PC-9 (cell line): ENCODE measurements at regions of chr17 and their contacts with region 1.

Region 1: DNA sequence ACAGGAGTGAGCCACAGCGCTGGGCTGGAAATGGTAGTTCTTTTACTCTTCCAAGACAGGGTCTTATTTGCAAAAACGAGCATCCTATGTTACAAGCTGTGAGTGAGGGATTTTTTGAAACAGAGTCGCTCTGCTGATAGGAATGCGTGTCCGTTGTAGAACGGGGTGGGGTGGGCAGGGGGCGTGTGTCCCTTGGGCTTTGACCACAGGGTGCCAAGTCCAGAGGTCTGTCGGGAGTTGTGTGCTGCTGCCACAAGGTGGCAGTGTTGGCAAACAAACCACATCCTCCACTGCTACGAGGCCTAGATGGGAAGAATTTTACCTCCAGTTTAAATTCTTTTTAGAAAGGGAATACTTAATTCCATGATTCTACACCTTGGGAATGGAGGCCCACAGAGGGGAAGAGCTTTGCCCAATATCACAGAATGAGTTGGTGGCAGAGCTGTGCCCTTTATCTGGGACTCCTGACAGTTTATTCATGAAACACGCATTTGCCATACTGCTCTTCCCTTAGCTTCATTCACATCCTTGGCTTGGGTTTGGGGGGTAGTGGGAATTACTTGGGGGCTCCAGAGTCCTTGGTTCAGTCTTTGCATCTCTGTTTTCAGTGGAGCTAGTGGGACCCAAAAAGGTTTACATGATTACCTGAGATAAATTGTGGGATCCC is 30.6 kb upstream of the ETV4 start:
- DNase-seq: peak; percentile 55 to 67
- H3K4me3 ChIP-seq: no peak overlapping the region
- H3K27ac ChIP-seq: no peak overlapping the region
- H3K4me1 ChIP-seq: peaks cover 52% of the 10 kb centered on the region
- H3K27me3 ChIP-seq: no peaks in the 10 kb centered on the region
- CTCF ChIP-seq: peak; percentile 95

Region 2: GRCh38 chr17:43517615-43518386 is 58.9 kb before region 1 on chr17:
- CTCF ChIA-PET with region 1: interaction called, 4 read pairs
- POLR2A ChIA-PET with region 1: no interaction called
- intact Hi-C with region 1: loop called (anchors 1 kb)
- DNase-seq: no peak
- H3K4me3 ChIP-seq: no peak overlapping the region
- H3K27ac ChIP-seq: no peak overlapping the region
- H3K4me1 ChIP-seq: no peaks in the 10 kb centered on the region
- H3K27me3 ChIP-seq: no peaks in the 10 kb centered on the region
- CTCF ChIP-seq: no peak

Region 3: GRCh38 chr17:43546319-43547188 is 30.1 kb before region 1 on chr17 and contains the start of gene ETV4:
- CTCF ChIA-PET with region 1: no interaction called
- POLR2A ChIA-PET with region 1: no interaction called
- intact Hi-C with region 1: no loop called
- DNase-seq: peak; percentile 86 to 96
- H3K4me3 ChIP-seq: peak within 1 kb of the TSS; percentile 85
- H3K27ac ChIP-seq: peak within 1 kb of the TSS; percentile 94
- H3K4me1 ChIP-seq: peaks cover 34% of the 10 kb centered on the region
- H3K27me3 ChIP-seq: no peaks in the 10 kb centered on the region
- CTCF ChIP-seq: no peak
- total RNA-seq, gene ETV4: 61.9 and 84.2 TPM in 2 replicates

Region 4: DNA sequence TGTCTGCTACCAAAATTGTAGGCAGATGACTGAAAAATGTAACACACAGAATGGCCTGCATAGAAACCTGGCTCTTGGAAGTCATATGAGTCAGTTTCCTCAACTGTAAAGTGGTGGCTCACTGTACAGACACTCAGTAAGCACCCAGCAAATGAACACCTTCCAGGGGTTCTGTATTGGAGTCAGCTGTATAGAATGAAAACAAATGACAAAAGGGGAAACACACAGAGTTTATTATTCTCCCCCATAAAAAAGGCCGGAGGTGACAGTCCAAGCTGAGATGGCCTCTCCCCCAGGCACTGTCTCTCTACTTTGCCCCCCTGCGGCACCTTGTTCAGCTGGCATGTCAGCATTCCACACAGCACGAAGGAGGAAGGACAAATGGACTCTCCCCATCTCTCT is 91.3 kb after region 1 on chr17:
- CTCF ChIA-PET with region 1: interaction called, 24 read pairs
- POLR2A ChIA-PET with region 1: interaction called, 5 read pairs
- intact Hi-C with region 1: loop called (anchors 1 kb)
- DNase-seq: peak; percentile 72 to 76
- H3K4me3 ChIP-seq: peak overlapping the region; percentile 19; the same call in 1 of the 2 replicates
- H3K27ac ChIP-seq: peak overlapping the region; percentile 66
- H3K4me1 ChIP-seq: peaks cover 49% of the 10 kb centered on the region
- H3K27me3 ChIP-seq: no peaks in the 10 kb centered on the region
- CTCF ChIP-seq: no peak

Region 5: DNA sequence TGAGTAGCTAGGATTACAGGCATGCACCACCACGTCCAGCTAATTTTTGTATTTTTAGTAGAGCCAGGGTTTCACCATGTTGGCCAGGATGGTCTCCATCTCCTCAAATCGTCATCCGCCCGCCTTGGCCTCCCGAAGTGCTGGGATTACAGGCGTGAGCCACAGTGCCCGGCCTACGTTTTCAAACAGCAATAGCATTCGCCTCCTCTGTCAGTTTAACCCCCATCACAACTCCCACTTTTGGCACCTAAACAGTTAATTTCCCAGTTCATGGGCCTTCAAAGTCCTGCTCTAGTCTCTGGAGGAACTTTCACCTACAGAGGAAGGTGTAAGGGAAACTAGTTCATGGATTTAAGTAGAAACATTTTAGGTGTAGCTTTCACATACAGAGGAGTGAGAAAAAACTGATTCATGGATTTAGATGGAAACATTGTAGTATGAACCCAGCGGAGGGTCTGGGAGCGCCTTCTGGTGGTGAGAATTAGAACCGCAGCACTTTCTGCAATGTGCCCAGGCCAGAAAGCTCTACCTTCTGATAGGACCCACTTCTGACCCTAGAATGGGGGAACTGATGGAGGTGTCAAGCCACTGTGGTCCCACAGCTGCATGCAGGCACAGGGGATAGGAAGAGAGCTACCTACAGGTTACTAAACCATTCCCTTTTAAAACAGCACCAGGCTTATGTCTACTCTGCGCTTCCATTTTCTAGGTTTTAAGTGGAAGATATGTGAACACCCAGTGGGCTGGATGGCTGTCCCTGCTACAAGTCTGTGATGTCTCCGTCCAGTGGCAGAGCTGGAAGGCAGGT is 97.0 kb after region 1 on chr17:
- CTCF ChIA-PET with region 1: interaction called, 24 read pairs
- POLR2A ChIA-PET with region 1: interaction called, 5 read pairs
- intact Hi-C with region 1: loop called (anchors 1 kb)
- DNase-seq: peak; percentile 57 to 76
- H3K4me3 ChIP-seq: no peak overlapping the region
- H3K27ac ChIP-seq: no peak overlapping the region
- H3K4me1 ChIP-seq: peaks cover 40% of the 10 kb centered on the region
- H3K27me3 ChIP-seq: no peaks in the 10 kb centered on the region
- CTCF ChIP-seq: peak; percentile 95

Region 6: GRCh38 chr17:43694077-43694870 is 117.6 kb after region 1 on chr17:
- CTCF ChIA-PET with region 1: no interaction called
- POLR2A ChIA-PET with region 1: no interaction called
- intact Hi-C with region 1: loop called (anchors 1 kb)
- DNase-seq: peak; percentile 68 to 72
- H3K4me3 ChIP-seq: no peak overlapping the region
- H3K27ac ChIP-seq: no peak overlapping the region
- H3K4me1 ChIP-seq: no peaks in the 10 kb centered on the region
- H3K27me3 ChIP-seq: no peaks in the 10 kb centered on the region
- CTCF ChIP-seq: peak; percentile 97

Region 7: GRCh38 chr17:43706235-43706634 is 129.5 kb after region 1 on chr17:
- CTCF ChIA-PET with region 1: no interaction called
- POLR2A ChIA-PET with region 1: no interaction called
- intact Hi-C with region 1: no loop called
- DNase-seq: no peak
- H3K4me3 ChIP-seq: no peak overlapping the region
- H3K27ac ChIP-seq: no peak overlapping the region
- H3K4me1 ChIP-seq: no peaks in the 10 kb centered on the region
- H3K27me3 ChIP-seq: no peaks in the 10 kb centered on the region
- CTCF ChIP-seq: no peak

Region 8: DNA sequence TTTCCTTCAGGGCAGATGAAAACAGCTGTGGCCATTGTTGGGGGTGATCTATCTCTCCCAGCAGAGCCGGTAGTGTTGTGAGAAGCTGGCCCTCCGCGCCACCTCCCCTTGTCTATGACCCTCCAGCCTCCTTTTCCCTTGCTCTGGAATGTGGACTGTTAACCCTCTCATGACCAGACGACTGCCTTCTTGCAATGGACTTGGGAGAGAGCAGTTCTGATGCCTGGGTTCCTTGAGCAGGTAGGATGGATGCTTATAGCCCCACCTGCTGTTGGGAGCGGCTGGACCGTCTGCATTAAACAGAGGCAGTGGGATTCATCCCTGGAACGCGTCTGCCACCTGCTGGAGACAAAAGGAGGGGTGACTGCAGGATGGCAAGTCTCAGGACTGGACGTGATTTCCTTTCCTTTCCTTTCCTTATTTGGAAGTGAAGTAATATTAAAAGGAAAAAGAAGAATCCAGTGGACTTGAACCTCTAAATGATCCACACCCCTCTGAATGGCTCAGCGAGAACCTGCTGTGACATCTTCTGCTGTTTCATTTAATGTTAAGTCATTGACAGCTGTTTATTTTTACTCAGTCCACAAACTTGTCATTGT is 183.7 kb after region 1 on chr17:
- CTCF ChIA-PET with region 1: interaction called, 7 read pairs
- POLR2A ChIA-PET with region 1: no interaction called
- intact Hi-C with region 1: loop called (anchors 1 kb)
- DNase-seq: peak; percentile 77 to 92
- H3K4me3 ChIP-seq: no peak overlapping the region
- H3K27ac ChIP-seq: no peak overlapping the region
- H3K4me1 ChIP-seq: peaks cover 11% of the 10 kb centered on the region
- H3K27me3 ChIP-seq: no peaks in the 10 kb centered on the region
- CTCF ChIP-seq: peak; percentile 99

Region 9: DNA sequence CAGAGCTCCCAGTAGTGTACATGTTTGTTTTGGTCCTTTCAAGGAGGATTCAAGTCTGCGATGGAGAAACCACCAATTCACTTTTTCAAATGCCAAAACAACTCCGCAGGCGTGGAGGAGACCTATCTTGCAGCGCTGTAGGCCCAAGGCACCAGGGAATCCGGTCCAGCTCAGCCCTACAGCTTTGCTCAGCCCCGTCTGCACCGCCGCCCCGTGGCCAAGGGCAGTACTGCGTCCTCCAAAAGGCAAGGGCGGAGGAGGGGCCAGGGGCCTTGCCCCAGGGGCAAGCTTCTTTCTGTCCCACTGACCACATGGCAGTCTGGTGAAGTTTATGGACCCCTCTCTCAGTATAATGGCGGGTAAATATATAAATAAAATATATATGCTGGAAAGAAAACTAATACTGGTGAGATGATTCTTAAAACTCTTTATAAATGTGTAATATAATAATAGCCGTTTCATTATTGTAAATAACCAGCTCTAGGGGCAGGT is 269.6 kb after region 1 on chr17:
- CTCF ChIA-PET with region 1: interaction called, 10 read pairs
- POLR2A ChIA-PET with region 1: no interaction called
- intact Hi-C with region 1: no loop called
- DNase-seq: peak in 1 of 2 experiments; percentile 83
- H3K4me3 ChIP-seq: no peak overlapping the region
- H3K27ac ChIP-seq: no peak overlapping the region
- H3K4me1 ChIP-seq: peaks cover 15% of the 10 kb centered on the region
- H3K27me3 ChIP-seq: peaks cover 3% of the 10 kb centered on the region; the same call in 1 of the 2 replicates
- CTCF ChIP-seq: peak; percentile 98